Activated CD4-positive, alpha-beta memory T cell treated with anti-CD3 and anti-CD28 coated beads for 36 hours (primary cell): ENCODE measurements at regions of chr20 and their contacts with region 1.

Region 1: DNA sequence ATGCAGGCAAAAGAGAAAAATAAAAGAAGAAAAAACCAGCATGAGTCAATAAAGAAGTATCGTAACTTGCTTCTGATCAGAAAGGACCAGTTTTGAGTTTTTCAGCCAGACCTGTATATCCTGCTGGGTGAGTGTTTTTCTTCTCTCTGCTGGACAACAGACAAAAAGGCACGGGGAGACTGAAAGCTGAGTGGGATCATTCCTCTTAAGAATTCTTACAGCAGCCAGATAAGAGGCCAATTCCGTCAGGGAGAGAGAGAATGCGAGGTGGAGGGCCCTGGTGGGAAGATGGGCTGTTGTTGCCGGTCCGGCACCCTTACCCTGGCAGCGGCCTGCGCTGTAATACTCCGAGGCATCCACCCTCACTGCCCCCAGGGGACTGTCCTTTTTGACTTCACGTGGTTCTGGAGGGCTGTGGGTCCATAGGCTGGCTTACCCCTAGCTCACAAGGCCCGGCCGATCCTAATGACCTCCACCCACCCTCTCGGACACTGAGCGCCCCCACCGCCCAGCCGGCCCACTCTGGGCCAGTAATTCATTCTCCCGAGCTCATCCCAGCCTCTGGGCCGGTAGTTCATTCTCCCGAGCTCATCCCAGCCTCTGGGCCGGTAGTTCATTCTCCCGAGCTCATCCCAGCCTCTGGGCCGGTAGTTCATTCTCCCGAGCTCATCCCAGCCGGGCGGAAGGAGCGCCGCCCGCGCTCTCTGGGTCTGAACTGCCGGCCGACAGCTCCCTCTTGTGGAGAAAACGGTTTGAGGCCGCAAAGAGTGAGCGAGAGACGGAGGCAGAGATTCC is 118.3 kb upstream of the SIRPA start:
- DNase-seq: peak; percentile 89
- H3K4me3 Mint-ChIP-seq: peak overlapping the region; percentile 73
- H3K27ac Mint-ChIP-seq: no peak overlapping the region
- H3K4me1 Mint-ChIP-seq: peaks cover 15% of the 10 kb centered on the region
- H3K27me3 Mint-ChIP-seq: peaks cover 3% of the 10 kb centered on the region

Region 2: DNA sequence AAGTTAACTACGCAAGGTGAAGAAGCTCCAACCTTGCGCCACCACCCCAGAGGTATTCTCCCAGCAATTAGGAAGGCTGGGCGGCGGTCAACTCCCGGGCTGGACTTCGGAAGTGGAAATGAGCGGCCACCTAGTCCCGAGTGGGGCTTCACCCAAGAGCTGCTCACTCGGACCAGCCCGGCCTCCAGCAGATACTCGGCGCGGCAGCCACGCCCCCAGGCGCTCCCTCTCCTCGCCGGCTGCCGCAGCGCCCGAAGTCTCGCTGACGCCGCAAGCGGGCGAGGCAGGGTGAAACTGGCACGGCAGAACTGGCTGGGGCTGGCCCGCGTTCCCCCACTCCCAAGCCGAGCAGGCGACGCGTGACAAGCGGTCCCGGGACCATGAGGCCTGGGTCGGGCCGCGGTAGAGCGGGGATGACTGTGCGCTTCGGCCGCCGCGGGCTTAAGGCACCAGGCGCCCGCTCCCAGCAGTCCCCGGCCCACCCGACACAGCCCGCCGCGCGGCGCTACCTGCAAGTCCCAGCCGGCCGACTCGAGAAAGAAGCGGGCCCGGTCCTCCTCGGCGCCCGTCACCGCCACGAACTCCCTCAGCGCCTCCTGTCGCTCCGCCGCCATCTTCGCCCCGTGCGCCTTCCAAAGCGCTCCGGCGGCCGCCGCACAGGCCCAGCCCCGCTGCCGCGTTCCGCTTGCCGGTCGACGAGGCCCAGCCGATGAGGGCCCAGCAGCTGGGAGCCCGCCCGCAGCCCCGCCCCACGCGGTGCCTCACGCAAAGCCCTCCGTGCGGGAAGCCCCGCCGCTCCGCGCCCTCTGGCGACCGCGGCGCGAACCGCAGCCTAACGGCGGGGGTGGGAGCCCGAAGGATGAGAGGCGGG is 310.4 kb before region 1 on chr20 and contains the start of gene NSFL1C:
- CTCF ChIA-PET with region 1: interaction called, 23 read pairs
- POLR2A ChIA-PET with region 1: no interaction called
- intact Hi-C with region 1: loop called (anchors 5 kb)
- DNase-seq: peak; percentile 98
- H3K4me3 Mint-ChIP-seq: peak within 1 kb of the TSS; percentile 82
- H3K27ac Mint-ChIP-seq: peak within 1 kb of the TSS; percentile 77
- H3K4me1 Mint-ChIP-seq: peaks cover 38% of the 10 kb centered on the region
- H3K27me3 Mint-ChIP-seq: peaks cover 6% of the 10 kb centered on the region
- total RNA-seq, gene NSFL1C: 81.8 to 83.1 TPM

Region 3: GRCh38 chr20:1509237-1509636 is 267.6 kb before region 1 on chr20:
- CTCF ChIA-PET with region 1: interaction called, 44 read pairs
- POLR2A ChIA-PET with region 1: no interaction called
- intact Hi-C with region 1: loop called (anchors 1 kb)
- DNase-seq: peak; percentile 39
- H3K4me3 Mint-ChIP-seq: no peak overlapping the region
- H3K27ac Mint-ChIP-seq: no peak overlapping the region
- H3K4me1 Mint-ChIP-seq: no peaks in the 10 kb centered on the region
- H3K27me3 Mint-ChIP-seq: peaks cover 9% of the 10 kb centered on the region

Region 4: DNA sequence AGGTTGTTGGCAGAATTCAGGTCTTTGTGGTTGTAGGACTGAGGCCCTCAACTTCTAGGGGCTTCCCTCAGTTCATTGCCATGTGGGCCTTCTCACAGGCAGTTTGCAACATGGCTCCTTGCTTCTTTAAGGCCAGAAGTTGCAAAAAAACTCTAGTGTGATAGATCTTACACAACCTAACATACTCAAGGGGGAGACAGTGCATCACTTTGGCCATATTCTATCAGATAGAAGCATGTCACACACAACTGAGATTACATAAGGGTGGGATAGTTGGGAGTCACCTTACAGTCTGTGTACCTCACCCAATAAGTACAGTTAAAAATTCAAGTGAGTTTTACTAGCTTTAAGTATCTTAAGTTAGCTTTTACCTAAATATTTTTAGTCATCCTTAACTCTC is 220.9 kb before region 1 on chr20:
- CTCF ChIA-PET with region 1: interaction called, 37 read pairs
- POLR2A ChIA-PET with region 1: no interaction called
- intact Hi-C with region 1: no loop called
- DNase-seq: no peak
- H3K4me3 Mint-ChIP-seq: no peak overlapping the region
- H3K27ac Mint-ChIP-seq: no peak overlapping the region
- H3K4me1 Mint-ChIP-seq: peaks cover 3% of the 10 kb centered on the region
- H3K27me3 Mint-ChIP-seq: no peaks in the 10 kb centered on the region

Region 5: DNA sequence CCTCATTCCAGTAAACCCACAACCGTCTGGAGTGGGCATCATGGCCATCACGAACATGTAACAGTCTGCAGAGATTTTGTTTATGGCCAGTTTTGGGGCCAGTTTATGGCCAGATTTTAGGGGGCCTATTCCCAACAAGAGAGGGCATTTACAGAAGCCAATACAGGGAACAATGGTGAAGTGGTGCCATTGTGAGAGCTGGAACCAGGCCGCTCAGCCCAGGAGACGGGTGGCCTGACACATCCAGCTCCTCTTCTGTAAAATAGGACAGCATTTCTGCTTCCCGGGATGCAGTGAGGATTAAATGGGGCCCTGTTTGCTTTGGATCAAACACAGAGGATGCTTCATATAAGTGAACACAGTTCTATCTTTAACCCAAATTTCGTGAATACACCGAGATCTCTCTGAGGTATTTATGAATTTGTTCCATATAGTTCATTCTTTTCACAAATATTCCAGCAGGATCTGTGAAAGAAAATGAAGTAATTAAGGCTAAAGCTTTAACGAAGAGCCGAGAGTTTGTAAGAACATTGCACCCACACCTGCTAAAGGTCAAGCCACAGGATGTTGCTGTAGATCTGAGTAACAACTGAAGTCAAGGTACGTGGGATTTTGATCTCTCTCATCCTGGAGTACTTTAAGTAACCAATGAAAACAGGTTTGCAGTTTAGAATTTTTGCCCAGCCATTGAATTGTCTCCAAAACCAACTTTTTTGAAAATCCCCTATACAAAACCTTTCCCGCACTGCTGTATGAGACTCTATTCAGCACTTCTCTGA is 104.8 kb before region 1 on chr20:
- CTCF ChIA-PET with region 1: interaction called, 10 read pairs
- POLR2A ChIA-PET with region 1: no interaction called
- intact Hi-C with region 1: no loop called
- DNase-seq: peak; percentile 64
- H3K4me3 Mint-ChIP-seq: peak overlapping the region; percentile 47
- H3K27ac Mint-ChIP-seq: peak overlapping the region; percentile 97
- H3K4me1 Mint-ChIP-seq: peaks cover 97% of the 10 kb centered on the region
- H3K27me3 Mint-ChIP-seq: no peaks in the 10 kb centered on the region

Region 6: GRCh38 chr20:1764136-1765033 is 12.5 kb before region 1 on chr20:
- CTCF ChIA-PET with region 1: interaction called, 99 read pairs
- POLR2A ChIA-PET with region 1: no interaction called
- intact Hi-C with region 1: no loop called
- DNase-seq: peak; percentile 78
- H3K4me3 Mint-ChIP-seq: no peak overlapping the region
- H3K27ac Mint-ChIP-seq: no peak overlapping the region
- H3K4me1 Mint-ChIP-seq: peaks cover 3% of the 10 kb centered on the region
- H3K27me3 Mint-ChIP-seq: peaks cover 4% of the 10 kb centered on the region

Region 7: GRCh38 chr20:1920252-1920651 is 143.4 kb after region 1 on chr20:
- CTCF ChIA-PET with region 1: no interaction called
- POLR2A ChIA-PET with region 1: no interaction called
- intact Hi-C with region 1: no loop called
- DNase-seq: no peak
- H3K4me3 Mint-ChIP-seq: no peak overlapping the region
- H3K27ac Mint-ChIP-seq: no peak overlapping the region
- H3K4me1 Mint-ChIP-seq: no peaks in the 10 kb centered on the region
- H3K27me3 Mint-ChIP-seq: no peaks in the 10 kb centered on the region